Transverse colon (tissue), 4 donors: ENCODE measurements at regions of chr14 and their contacts with region 1.

Region 1: GRCh38 chr14:69231462-69231861 is 28.5 kb upstream of the GALNT16 start:
- DNase-seq: no peak
- H3K4me3 ChIP-seq: no peak overlapping the region
- H3K27ac ChIP-seq: no peak overlapping the region
- H3K4me1 ChIP-seq: no peaks in the 10 kb centered on the region
- H3K27me3 ChIP-seq: no peaks in the 10 kb centered on the region
- CTCF ChIP-seq: no peak
- EP300 ChIP-seq: no peak
- POLR2A ChIP-seq: no peak

Region 2: DNA sequence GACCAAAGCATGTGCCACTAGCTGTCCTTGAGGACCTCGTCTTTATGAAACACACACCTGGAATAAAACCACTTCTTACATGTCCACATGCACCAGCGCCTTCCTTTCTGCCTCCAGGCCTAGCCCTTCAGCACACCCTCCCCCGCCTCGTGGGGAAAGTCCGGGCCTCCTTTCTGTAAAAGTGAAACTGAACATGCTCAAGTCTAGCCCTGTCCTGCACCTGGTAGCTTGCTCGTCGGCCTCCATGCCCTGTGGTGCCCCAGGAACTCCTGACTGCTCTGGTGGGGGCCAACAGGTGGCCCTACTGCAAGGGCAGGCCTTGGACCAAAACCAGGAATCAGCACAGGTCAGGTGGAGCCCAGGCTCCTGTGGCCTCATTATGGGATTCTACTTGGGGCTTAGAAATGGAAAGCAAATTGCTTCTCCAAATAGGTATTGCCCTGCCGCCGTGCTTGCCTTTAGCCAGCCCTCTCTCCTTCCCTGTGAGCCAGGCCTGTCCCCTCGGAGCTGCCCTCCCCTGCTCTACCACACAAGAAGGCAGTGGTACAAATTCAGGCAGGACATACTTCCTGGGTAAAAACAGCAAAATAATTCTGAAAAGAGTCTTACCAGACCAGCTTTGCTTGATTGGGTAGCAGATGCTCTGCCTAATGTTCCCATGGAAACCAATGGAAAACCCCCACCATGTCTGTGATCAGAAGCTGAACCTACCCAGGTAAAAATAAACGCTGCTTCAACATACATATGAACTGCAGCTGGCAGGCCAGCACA is 123.1 kb after region 1 on chr14:
- in situ Hi-C with region 1: no loop called
- intact Hi-C with region 1: loop called (anchors 5 kb)
- DNase-seq: peak; percentile 75
- H3K4me3 ChIP-seq: no peak overlapping the region
- H3K27ac ChIP-seq: peak overlapping the region in 2 of 4 donors; percentile 23 to 38
- H3K4me1 ChIP-seq: peaks cover 0 to 11% (median 5%) of the 10 kb centered on the region in 4 donors
- H3K27me3 ChIP-seq: no peaks in the 10 kb centered on the region
- CTCF ChIP-seq: no peak
- EP300 ChIP-seq: no peak
- POLR2A ChIP-seq: no peak